ENCODE measurements at regions of chr9 and their contacts with region 1.

Region 1: GRCh38 chr9:2066312-2067273 is 51.4 kb downstream of the SMARCA2 start:
- DNase-seq: no peak
- ATAC-seq: peak in 3 of 8 donors; percentile 46 to 50 (median 46)
- H3K4me3 ChIP-seq: no peak overlapping the region
- H3K27ac ChIP-seq: no peak overlapping the region
- H3K4me1 ChIP-seq: peaks cover 0 to 2% (median 0%) of the 10 kb centered on the region in 9 donors
- H3K27me3 ChIP-seq: no peaks in the 10 kb centered on the region
- CTCF ChIP-seq: peak in 7 of 9 donors; percentile 15 to 54 (median 39)

Region 2: GRCh38 chr9:1939926-1940368 is 126.6 kb before region 1 on chr9:
- intact Hi-C with region 1: loop called in 2 of 10 experiments (anchors 2 to 5 kb)
- DNase-seq: no peak
- ATAC-seq: peak in 1 of 8 donors; percentile 31
- H3K4me3 ChIP-seq: no peak overlapping the region
- H3K27ac ChIP-seq: no peak overlapping the region
- H3K4me1 ChIP-seq: no peaks in the 10 kb centered on the region
- H3K27me3 ChIP-seq: peaks cover 0 to 7% (median 0%) of the 10 kb centered on the region in 7 donors
- CTCF ChIP-seq: peak in 8 of 9 donors; percentile 26 to 63 (median 56)

Region 3: GRCh38 chr9:2000314-2000713 is 66.3 kb before region 1 on chr9:
- intact Hi-C with region 1: loop called in 1 of 10 experiments (anchors 10 kb)
- DNase-seq: no peak
- ATAC-seq: no peak
- H3K4me3 ChIP-seq: no peak overlapping the region
- H3K27ac ChIP-seq: no peak overlapping the region
- H3K4me1 ChIP-seq: no peaks in the 10 kb centered on the region
- H3K27me3 ChIP-seq: peaks cover 0 to 4% (median 0%) of the 10 kb centered on the region in 7 donors
- CTCF ChIP-seq: no peak

Region 4: GRCh38 chr9:2109069-2109650 is 42.6 kb after region 1 on chr9:
- intact Hi-C with region 1: no loop called
- DNase-seq: no peak
- ATAC-seq: no peak
- H3K4me3 ChIP-seq: no peak overlapping the region
- H3K27ac ChIP-seq: peak overlapping the region in 1 of 10 donors; percentile 16
- H3K4me1 ChIP-seq: no peaks in the 10 kb centered on the region
- H3K27me3 ChIP-seq: no peaks in the 10 kb centered on the region
- CTCF ChIP-seq: no peak

Region 5: GRCh38 chr9:2158111-2158610 is 91.6 kb after region 1 on chr9:
- intact Hi-C with region 1: no loop called
- DNase-seq: peak; percentile 32 to 37
- ATAC-seq: peak; percentile 31 to 75 (median 51)
- H3K4me3 ChIP-seq: peak overlapping the region; percentile 26 to 67 (median 55)
- H3K27ac ChIP-seq: peak overlapping the region in 9 of 10 donors; percentile 65 to 88 (median 81)
- H3K4me1 ChIP-seq: peaks cover 0 to 59% (median 36%) of the 10 kb centered on the region in 9 donors
- H3K27me3 ChIP-seq: no peaks in the 10 kb centered on the region
- CTCF ChIP-seq: peak in 1 of 9 donors; percentile 17